Caco-2 (cell line): ENCODE measurements at regions of chr11 and their contacts with region 1.

Region 1: GRCh38 chr11:67482825-67483798 is at the start of gene AIP:
- DNase-seq: peak; percentile 100
- H3K4me3 ChIP-seq: peak within 1 kb of the TSS; percentile 48
- H3K4me3 Mint-ChIP-seq: peak within 1 kb of the TSS; percentile 99
- H3K27ac Mint-ChIP-seq: peak within 1 kb of the TSS; percentile 99
- H3K4me1 ChIP-seq: peaks cover 4% of the 10 kb centered on the region; the same call in 1 of the 2 replicates
- H3K4me1 Mint-ChIP-seq: peaks cover 24% of the 10 kb centered on the region
- H3K27me3 ChIP-seq: no peaks in the 10 kb centered on the region
- H3K27me3 Mint-ChIP-seq: no peaks in the 10 kb centered on the region
- CTCF ChIP-seq: peak; percentile 25 to 65
- total RNA-seq, gene AIP: 110 and 112 TPM in 2 replicates

Region 2: DNA sequence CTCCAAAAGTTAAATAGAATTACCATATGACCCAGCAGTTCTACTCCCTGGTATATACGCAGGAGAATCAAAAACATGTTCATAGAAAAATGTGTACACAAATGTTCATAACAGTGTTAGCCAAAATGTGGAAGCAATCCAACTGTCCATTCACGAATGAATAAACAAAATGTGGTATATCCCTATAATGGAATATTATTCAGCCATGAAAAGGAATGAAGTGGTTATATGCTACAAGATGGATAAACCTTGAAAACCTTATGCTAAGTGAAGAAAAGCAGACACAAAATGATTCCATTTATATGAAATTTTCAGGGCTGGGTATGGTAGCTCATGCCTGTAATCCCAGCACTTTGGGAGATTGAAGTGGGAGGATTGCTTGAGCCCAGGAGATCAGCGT is 145.9 kb before region 1 on chr11:
- CTCF ChIA-PET with region 1: no interaction called
- POLR2A ChIA-PET with region 1: no interaction called
- intact Hi-C with region 1: no loop called
- DNase-seq: no peak
- H3K4me3 ChIP-seq: no peak overlapping the region
- H3K4me3 Mint-ChIP-seq: no peak overlapping the region
- H3K27ac Mint-ChIP-seq: no peak overlapping the region
- H3K4me1 ChIP-seq: no peaks in the 10 kb centered on the region
- H3K4me1 Mint-ChIP-seq: no peaks in the 10 kb centered on the region
- H3K27me3 ChIP-seq: no peaks in the 10 kb centered on the region
- H3K27me3 Mint-ChIP-seq: no peaks in the 10 kb centered on the region
- CTCF ChIP-seq: no peak

Region 3: DNA sequence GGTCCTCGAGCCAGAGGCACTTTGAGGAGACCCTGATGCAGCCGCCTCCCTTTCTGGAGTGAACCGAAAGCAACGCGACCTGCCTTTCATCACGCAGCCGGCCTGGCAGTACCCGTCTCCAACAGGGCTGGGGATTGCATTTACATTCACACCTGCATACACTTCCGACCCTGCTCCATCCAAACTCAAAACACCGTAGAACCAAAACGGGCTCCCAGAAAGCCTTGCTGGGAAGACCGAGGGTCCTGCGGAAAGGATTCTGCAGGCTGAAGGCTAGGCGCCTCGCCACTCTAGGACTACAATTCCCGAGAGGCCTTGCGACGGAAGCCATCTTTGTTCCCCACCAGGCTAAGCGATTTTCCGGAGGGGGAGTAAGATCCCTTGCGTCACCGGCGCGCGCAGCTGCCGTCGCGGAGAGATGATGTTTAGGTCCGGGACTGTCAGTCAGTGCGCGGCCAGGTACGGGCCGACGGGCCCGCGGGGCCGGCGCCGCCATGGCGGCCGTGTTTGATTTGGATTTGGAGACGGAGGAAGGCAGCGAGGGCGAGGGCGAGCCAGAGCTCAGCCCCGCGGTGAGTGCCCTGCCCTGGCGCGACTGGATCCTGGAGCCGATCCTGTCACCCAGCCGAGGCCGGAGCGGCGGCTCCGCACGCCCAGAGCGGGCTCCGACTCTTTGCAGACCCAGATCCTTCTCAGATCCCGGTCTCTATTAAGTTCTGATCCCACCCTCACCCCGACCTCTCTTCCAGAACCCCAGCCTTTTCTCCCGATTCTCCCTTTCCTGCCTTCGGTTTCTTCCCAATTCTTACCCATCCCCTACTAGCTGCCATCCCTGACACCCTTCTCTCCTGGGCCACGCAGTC is 54.8 kb before region 1 on chr11 and contains the start of gene RPS6KB2:
- CTCF ChIA-PET with region 1: no interaction called
- POLR2A ChIA-PET with region 1: no interaction called
- intact Hi-C with region 1: loop called (anchors 1 kb)
- DNase-seq: peak; percentile 100
- H3K4me3 ChIP-seq: peak within 1 kb of the TSS; percentile 74
- H3K4me3 Mint-ChIP-seq: peak within 1 kb of the TSS; percentile 93
- H3K27ac Mint-ChIP-seq: peak within 1 kb of the TSS; percentile 96
- H3K4me1 ChIP-seq: peaks cover 4% of the 10 kb centered on the region; the same call in 1 of the 2 replicates
- H3K4me1 Mint-ChIP-seq: no peaks in the 10 kb centered on the region
- H3K27me3 ChIP-seq: no peaks in the 10 kb centered on the region
- H3K27me3 Mint-ChIP-seq: no peaks in the 10 kb centered on the region
- CTCF ChIP-seq: no peak
- total RNA-seq, gene RPS6KB2: 109 and 116 TPM in 2 replicates

Region 4: GRCh38 chr11:67439321-67439883 is 43.7 kb before region 1 on chr11:
- CTCF ChIA-PET with region 1: no interaction called
- POLR2A ChIA-PET with region 1: interaction called, 11 read pairs
- intact Hi-C with region 1: loop called (anchors 1 kb)
- DNase-seq: peak in 1 of 2 experiments; percentile 68
- H3K4me3 ChIP-seq: no peak overlapping the region
- H3K4me3 Mint-ChIP-seq: peak overlapping the region; percentile 2
- H3K27ac Mint-ChIP-seq: peak overlapping the region; percentile 9
- H3K4me1 ChIP-seq: peaks cover 14% of the 10 kb centered on the region
- H3K4me1 Mint-ChIP-seq: no peaks in the 10 kb centered on the region
- H3K27me3 ChIP-seq: no peaks in the 10 kb centered on the region
- H3K27me3 Mint-ChIP-seq: no peaks in the 10 kb centered on the region
- CTCF ChIP-seq: peak in 1 of 2 experiments; percentile 38

Region 5: DNA sequence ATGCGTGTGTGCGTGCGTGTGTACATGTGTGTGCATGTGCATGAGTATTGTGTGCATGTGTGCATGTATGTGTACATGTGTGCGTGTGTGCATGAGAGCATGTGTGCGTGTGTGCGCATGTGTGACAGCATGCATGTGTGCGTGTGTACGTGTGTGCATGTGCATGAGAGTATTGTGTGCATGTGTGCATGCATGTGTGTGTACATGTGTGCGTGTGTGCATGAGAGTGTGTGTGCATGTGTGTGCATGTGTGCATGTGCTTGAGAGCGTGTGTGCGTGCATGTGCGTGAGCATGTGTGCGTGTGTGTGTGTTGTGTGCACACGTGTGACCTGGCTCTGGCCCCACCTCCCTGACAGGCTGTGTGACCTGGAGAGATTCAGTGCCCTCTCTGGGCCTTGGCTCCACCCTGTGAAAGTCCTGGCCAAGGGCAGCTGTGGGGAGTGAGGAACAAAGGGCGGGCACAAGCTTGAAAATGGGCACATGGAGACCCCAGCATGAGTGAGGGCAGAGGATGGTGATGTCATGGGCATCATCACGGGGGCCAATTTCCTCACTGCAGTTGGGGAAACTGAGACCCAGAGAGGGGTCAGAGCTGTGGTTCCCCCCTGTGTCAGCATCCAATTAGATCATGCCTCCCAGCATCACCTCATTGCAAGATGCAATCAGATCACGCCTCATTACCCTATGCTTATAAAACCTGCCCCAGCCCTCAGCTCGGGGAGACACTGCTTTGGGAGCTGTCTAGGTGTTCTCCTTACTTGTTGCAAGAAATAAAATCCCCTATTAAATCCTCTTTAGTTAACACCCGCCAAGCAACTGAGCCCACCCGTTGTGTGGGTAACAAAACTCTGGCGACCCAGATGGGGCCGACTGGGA is 166.8 kb after region 1 on chr11:
- CTCF ChIA-PET with region 1: no interaction called
- POLR2A ChIA-PET with region 1: interaction called, 11 read pairs
- intact Hi-C with region 1: no loop called
- DNase-seq: no peak
- H3K4me3 ChIP-seq: 0 out of 2 replicates have a peak overlapping the region, but pooled peaks have one; percentile 2
- H3K4me3 Mint-ChIP-seq: peak overlapping the region; percentile 12
- H3K27ac Mint-ChIP-seq: peak overlapping the region; percentile 34
- H3K4me1 ChIP-seq: peaks cover 15% of the 10 kb centered on the region
- H3K4me1 Mint-ChIP-seq: peaks cover 26% of the 10 kb centered on the region
- H3K27me3 ChIP-seq: no peaks in the 10 kb centered on the region
- H3K27me3 Mint-ChIP-seq: no peaks in the 10 kb centered on the region
- CTCF ChIP-seq: no peak